Aorta (tissue), 5 donors: ENCODE measurements at regions of chr17 and their contacts with region 1.

Region 1: DNA sequence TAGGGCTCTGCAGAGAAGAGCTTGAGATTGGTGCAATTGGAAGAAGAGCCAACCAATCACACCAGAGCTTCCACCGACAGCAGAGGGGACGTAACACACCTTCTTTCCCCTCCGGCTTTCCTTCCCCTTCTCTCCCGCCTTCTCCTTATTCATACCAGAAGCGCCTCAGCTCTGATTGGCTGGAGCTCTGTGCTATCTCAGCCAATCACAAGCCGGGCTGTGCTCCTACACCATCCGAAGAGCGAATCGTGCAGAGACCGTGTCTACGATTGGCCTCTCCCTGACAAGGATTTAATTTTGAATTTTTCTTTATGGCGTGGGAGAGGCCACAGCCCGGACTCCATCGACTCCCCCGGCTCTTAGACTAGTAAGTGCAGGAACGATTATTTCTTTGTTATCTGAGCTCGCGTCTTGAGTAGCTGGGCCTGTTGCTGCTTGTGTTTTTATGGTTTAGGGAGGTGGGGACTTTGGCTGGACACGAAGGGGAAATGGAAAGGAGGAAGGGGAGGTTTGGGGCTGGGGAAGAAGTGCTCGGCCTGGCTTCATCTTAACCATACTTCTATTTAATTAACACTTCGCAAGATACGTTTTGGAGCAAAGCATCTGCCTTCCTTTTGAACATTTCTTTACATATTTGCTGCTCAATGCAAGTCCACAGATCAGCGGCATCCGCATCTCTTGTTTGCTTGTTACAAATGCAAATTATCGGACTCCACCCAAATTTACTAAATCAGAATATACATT is at the start of gene PRR11:
- DNase-seq: peak; percentile 95 to 96
- ATAC-seq: peak; percentile 97
- H3K4me3 ChIP-seq: peak within 1 kb of the TSS; percentile 58 to 62
- H3K27ac ChIP-seq: peak within 1 kb of the TSS in 1 of 2 donors; percentile 79
- H3K4me1 ChIP-seq: peaks cover 0 to 1% of the 10 kb centered on the region in 2 donors
- H3K27me3 ChIP-seq: no peaks in the 10 kb centered on the region
- total RNA-seq, gene PRR11: 0.62 to 2.9 TPM

Region 2: DNA sequence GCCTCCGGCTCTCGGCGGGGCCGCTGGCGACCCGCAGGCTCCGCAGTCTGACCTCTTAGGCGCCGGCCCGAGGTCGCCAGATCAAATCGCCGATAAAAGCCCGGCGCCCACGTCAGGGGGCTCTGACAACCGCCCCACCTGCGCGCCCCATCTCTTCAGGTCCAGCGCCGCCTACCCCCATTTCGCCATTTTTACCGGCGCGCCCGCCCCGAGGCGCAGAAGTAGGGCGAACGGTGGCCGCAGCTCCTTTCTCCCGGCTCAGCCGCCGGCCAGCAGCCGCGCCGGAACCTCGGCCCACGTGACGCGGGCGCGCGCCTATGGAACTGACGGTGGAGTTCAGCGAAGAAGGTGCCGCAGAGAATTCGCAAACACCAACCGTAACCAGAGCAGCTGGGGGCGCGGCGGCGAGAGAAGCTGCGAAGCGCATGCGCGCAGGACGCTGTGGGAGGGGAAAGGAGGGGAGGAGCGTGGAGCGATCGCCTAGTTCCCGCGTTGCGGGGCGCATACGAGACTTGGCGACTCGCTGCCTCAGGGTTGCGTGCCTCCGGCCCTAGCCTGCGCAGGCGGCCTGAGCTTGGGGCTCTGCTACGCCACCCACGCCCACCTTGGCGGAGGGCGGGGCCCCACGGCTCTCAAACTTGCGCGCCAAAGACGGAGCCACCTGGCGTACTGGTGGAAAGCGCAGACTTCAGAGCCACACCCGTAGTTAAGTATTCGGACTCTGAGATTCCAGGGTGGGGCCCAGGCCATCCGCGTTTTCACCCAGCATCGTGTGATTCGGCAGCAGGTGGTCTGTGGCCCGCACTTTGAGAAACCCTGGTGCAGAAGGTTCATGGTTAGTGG is 48.9 kb before region 1 on chr17 and contains the start of gene TRIM37:
- intact Hi-C with region 1: loop called in 1 of 2 experiments (anchors 5 kb)
- DNase-seq: peak; percentile 99 to 100
- ATAC-seq: peak; percentile 100
- H3K4me3 ChIP-seq: peak within 1 kb of the TSS; percentile 59 to 60
- H3K27ac ChIP-seq: peak within 1 kb of the TSS in 1 of 2 donors; percentile 62
- H3K4me1 ChIP-seq: no peaks in the 10 kb centered on the region
- H3K27me3 ChIP-seq: no peaks in the 10 kb centered on the region
- total RNA-seq, gene TRIM37: 17.3 to 23.8 TPM